Mammary epithelial cell (primary cell): ENCODE measurements at regions of chr14 and their contacts with region 1.

Region 1: GRCh38 chr14:36582011-36582873 is at the start of gene NKX2-8:
- DNase-seq: peak; percentile 19
- H3K4me3 ChIP-seq: peak within 1 kb of the TSS; percentile 51 to 64 (median 53)
- H3K27ac ChIP-seq: no peak within 1 kb of the TSS
- H3K4me1 ChIP-seq: peaks cover 15% of the 10 kb centered on the region
- H3K27me3 ChIP-seq: peaks cover 24% of the 10 kb centered on the region
- CTCF ChIP-seq: no peak
- total RNA-seq, gene NKX2-8: 0.96 to 2.8 TPM

Region 2: DNA sequence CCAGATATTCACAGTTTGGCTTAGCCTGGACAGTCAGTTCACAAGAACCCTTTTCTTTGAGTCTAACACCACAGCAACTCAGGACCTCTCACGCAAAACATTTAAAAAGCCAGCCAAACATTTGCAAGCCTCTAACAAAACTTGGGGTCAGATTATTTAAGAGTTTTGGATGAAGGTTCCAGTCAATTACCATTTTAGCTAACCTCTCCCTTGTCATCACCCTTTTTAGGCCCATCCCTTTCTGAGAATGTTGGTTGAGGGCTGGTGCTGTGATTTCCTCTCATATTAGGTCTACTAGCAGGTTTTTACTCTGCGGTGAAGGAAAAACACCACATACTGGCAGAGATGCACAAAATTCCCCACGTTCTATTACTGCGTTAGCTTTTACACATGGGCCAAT is 100.1 kb after region 1 on chr14:
- CTCF ChIA-PET with region 1: interaction called, 10 read pairs
- dilution Hi-C with region 1: no loop called
- in situ Hi-C with region 1: no loop called
- intact Hi-C with region 1: no loop called
- DNase-seq: no peak
- H3K4me3 ChIP-seq: no peak overlapping the region
- H3K27ac ChIP-seq: no peak overlapping the region
- H3K4me1 ChIP-seq: no peaks in the 10 kb centered on the region
- H3K27me3 ChIP-seq: no peaks in the 10 kb centered on the region
- CTCF ChIP-seq: no peak

Region 3: DNA sequence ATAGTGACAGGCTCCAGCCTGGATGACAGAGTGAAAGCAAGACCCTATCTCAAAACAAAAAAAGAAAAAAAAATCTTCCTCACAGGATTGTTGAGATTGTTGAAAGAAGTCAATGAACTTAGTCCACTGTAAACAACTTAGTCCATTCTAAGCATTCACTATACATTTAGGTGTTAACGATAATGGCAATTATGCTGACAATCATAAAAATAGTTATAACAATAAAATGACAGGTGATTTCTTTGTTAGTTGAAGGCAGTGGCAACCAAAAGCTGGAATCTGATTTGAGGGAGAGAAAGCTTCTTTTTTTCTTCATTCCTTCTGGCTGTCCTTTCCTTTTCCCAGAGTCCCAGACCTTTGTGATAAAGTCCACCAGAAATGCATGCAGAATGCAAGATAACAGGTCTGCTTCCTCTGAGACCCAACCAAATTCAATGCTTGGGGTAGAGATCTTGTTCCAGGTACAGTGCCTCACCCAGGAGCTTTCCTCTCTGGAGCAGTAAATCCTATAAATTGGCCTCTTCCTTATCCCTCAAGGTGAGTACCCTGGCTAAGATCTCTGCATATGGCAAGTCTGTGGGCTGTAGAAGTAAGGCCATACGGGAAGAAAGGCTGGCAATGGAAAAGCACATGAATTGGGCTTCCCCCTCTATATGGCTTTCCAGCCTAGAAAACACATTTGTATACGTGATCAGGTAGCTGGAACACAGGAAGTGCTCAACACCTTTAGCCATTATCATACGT is 131.9 kb after region 1 on chr14:
- CTCF ChIA-PET with region 1: no interaction called
- dilution Hi-C with region 1: no loop called
- in situ Hi-C with region 1: no loop called
- intact Hi-C with region 1: no loop called
- DNase-seq: no peak
- H3K4me3 ChIP-seq: no peak overlapping the region
- H3K27ac ChIP-seq: no peak overlapping the region
- H3K4me1 ChIP-seq: no peaks in the 10 kb centered on the region
- H3K27me3 ChIP-seq: no peaks in the 10 kb centered on the region
- CTCF ChIP-seq: no peak